OCI-LY7 (cell line): ENCODE measurements at regions of chr3 and their contacts with region 1.

Region 1: DNA sequence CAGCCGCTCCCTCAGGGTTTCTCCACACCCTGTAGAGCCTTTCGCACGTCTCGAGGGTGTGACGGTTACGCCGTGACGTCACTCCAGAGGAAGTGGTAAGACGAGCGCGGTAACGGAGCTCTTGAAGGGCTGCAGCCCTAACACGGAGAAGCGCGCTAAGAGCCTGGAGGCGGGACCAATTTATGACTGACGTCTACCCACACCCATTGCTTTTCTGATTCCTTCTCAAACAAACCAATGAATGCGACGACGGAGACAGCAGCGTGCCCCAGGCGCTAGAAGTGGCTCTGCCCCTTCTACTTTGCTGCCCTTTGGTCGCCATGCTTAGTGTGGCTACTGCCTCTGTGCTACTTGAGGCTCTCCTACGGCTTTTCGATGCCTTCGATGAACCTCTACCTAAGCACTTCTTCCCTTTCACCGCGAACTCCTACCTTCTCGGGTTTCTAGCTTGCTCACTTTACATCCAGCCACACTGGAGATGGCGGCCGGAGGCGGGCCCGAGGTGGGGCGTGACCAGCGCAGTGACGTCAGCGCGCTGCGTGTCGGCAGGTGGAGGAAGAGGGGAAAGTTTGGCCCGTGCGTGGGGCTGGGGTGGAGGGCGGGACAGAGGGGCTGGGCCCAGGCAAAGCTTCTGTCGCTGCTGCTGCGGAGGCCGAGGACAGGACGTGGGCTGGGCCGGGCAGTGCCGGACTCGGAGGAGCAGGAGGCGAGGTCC is at the start of gene OXSR1:
- DNase-seq: peak; percentile 99
- H3K4me3 ChIP-seq: peak within 1 kb of the TSS; percentile 91
- H3K27ac ChIP-seq: peak within 1 kb of the TSS; percentile 65
- H3K4me1 ChIP-seq: peaks cover 34% of the 10 kb centered on the region
- CTCF ChIP-seq: no peak
- total RNA-seq, gene OXSR1: 21.4 and 22.4 TPM in 2 replicates

Region 2: GRCh38 chr3:38136777-38137614 is 28.1 kb before region 1 on chr3 and contains the start of gene ACAA1:
- CTCF ChIA-PET with region 1: interaction called, 6 read pairs
- POLR2A ChIA-PET with region 1: interaction called, 42 read pairs
- intact Hi-C with region 1: loop called (anchors 1 kb)
- DNase-seq: peak; percentile 98
- H3K4me3 ChIP-seq: peak within 1 kb of the TSS; percentile 95
- H3K27ac ChIP-seq: peak within 1 kb of the TSS; percentile 29
- H3K4me1 ChIP-seq: peaks cover 29% of the 10 kb centered on the region
- CTCF ChIP-seq: no peak
- total RNA-seq, gene ACAA1: 13.3 and 13.9 TPM in 2 replicates

Region 3: DNA sequence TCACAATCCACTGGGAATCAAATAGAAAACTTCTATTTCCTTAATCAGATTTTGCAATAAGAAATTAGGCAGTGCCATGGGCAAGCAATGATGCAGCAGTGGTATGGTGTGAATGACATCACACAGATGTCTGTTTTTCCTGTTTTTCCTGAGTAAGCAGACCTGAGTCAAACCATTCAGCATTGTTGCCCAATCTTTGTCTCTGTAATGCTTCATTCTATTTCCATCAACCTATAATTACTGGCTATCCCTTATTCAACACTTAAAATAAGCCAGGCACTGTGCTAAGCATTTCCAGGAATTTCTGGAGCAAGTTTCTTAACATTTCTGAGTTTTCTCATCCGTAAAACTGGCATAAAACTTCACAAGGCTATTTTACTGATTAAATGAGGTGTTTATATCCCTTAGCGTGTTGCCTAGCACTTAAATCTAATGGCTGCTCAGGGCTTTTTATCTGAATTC is 11.1 kb before region 1 on chr3:
- CTCF ChIA-PET with region 1: no interaction called
- POLR2A ChIA-PET with region 1: interaction called, 19 read pairs
- intact Hi-C with region 1: no loop called
- DNase-seq: no peak
- H3K4me3 ChIP-seq: no peak overlapping the region
- H3K27ac ChIP-seq: no peak overlapping the region
- H3K4me1 ChIP-seq: no peaks in the 10 kb centered on the region
- CTCF ChIP-seq: no peak